ENCODE measurements at regions of chr6 and their contacts with region 1.

Region 1: GRCh38 chr6:40138273-40138720 is 204.0 kb upstream of the MOCS1 start:
- DNase-seq: peak; percentile 27
- ATAC-seq: peak; percentile 82
- H3K4me3 ChIP-seq: no peak overlapping the region
- H3K27ac ChIP-seq: no peak overlapping the region
- H3K4me1 ChIP-seq: no peaks in the 10 kb centered on the region
- H3K27me3 ChIP-seq: no peaks in the 10 kb centered on the region
- CTCF ChIP-seq: no peak
- EP300 ChIP-seq: 0 out of 4 replicates have a peak, but pooled peaks of 1 of the 2 experiments have one; percentile 41
- POLR2A ChIP-seq: no peak
- RAD21 ChIP-seq: no peak

Region 2: DNA sequence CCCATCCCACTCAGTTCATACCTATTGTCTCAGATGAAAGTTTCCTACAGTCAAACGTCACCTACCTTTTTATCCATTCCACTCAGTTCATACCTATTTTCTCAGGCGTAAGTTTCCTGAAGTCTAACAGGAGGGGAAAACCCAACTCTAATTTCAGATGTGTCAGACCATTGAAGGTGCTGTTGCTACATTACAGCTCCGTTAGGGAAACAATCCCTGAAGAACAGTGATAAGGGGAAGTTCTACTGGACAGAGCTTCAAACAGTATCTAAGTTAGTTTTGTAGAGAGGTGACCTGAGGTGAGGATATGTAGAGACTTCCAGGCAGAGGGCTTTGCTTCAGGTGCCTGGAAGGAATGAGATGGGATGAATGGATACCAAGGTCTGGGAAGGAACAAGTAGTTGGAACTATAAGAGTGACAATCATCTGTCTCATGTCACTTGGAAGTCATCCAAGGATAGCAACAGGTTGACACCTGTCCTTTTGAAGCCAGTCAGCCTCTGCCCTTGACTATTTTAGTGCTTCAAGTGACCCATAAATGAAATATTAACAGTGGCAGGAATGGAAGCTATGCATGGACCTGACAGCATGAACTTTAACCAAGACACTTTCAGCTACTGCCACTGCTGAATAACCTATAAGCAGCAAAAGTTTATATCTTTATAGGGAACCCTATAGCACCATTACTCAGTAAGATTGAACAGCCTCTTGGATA is 12.5 kb before region 1 on chr6:
- CTCF ChIA-PET with region 1: interaction called, 8 read pairs
- POLR2A ChIA-PET with region 1: interaction called, 4 read pairs
- RAD21 ChIA-PET with region 1: interaction called, 9 read pairs
- SMC1A ChIA-PET with region 1: interaction called, 17 read pairs
- in situ Hi-C with region 1: no loop called
- intact Hi-C with region 1: no loop called
- DNase-seq: no peak
- ATAC-seq: no peak
- H3K4me3 ChIP-seq: no peak overlapping the region
- H3K27ac ChIP-seq: no peak overlapping the region
- H3K4me1 ChIP-seq: no peaks in the 10 kb centered on the region
- H3K27me3 ChIP-seq: no peaks in the 10 kb centered on the region
- CTCF ChIP-seq: no peak
- EP300 ChIP-seq: no peak
- POLR2A ChIP-seq: no peak
- RAD21 ChIP-seq: no peak

Region 3: DNA sequence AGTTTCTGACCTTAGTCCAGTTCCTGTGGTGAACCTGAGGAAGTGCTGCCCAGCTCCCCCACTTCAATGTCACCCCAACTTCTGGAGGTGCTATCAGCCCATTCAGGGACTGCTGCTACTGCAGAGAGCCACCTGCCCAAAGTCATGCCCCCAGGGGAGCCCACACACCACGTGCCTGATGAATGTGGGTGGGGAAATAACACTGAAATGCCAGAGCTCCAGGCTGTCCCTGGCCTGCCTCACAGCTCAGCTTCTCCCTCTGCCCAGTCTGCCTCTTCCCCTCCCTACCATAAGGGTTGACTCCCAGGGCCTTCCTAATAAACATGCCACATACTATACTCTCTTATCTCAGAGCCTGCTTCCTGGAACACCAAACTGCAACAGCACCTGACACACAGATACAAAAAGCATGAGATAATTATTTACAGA is 72.3 kb after region 1 on chr6:
- CTCF ChIA-PET with region 1: no interaction called
- POLR2A ChIA-PET with region 1: no interaction called
- RAD21 ChIA-PET with region 1: interaction called, 6 read pairs
- SMC1A ChIA-PET with region 1: interaction called, 20 read pairs
- in situ Hi-C with region 1: no loop called
- intact Hi-C with region 1: no loop called
- DNase-seq: no peak
- ATAC-seq: peak; percentile 84
- H3K4me3 ChIP-seq: no peak overlapping the region
- H3K27ac ChIP-seq: no peak overlapping the region
- H3K4me1 ChIP-seq: no peaks in the 10 kb centered on the region; the same call in 1 of the 2 replicates
- H3K27me3 ChIP-seq: no peaks in the 10 kb centered on the region
- CTCF ChIP-seq: no peak
- EP300 ChIP-seq: no peak
- POLR2A ChIP-seq: no peak
- RAD21 ChIP-seq: no peak

Measured in GM12878 (cell line).